Activated T-helper 1 cell treated with anti-CD3 and anti-CD28 coated beads, Interleukin-12 subunit alpha, Interleukin-12 subunit beta, Interleukin-2, Interleukin-4 antibody, amounts not matched to agents 30 ng/mL and 10 ng/mL and 1 ng/mL, durations not matched to agents 14 hours and 24 hours and 36 hours (primary cell): ENCODE measurements at regions of chr11 and their contacts with region 1.

Region 1: DNA sequence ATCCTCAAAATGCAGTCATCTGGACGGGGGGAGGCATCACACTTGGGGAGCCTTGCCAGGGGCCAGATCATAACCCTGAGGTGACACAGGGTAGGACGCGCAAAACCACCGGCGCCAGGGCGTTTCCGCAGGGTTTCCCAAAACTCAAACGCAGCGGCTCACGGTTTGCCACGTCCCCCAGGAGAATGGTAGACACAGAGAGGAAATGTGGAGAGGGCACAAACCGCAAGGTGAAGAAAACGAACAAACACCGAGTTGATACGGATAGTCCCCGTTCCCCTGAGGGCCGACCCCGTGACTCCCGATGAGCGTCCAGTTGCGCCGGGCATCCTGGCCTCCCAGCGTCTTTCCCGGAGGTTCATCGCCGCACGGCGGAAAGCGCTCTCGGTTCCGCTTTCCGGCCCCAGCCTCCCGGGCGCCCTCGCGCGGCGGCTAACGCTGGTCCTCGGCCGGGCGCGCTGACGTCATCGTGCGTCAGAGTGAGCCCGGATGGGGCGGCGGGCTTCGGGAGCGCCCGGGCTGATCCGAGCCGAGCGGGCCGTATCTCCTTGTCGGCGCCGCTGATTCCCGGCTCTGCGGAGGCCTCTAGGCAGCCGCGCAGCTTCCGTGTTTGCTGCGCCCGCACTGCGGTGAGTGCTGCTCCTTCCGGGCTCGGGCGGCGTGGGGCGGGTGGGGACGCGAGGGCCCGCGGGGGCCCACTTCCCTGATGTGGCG is at the start of gene BIRC2:
- DNase-seq: peak; percentile 94
- H3K4me3 Mint-ChIP-seq: peak within 1 kb of the TSS; percentile 98
- H3K27ac Mint-ChIP-seq: peak within 1 kb of the TSS; percentile 99
- H3K4me1 Mint-ChIP-seq: peaks cover 45% of the 10 kb centered on the region
- H3K27me3 Mint-ChIP-seq: no peaks in the 10 kb centered on the region
- total RNA-seq, gene BIRC2: 30.6 and 33.3 TPM in 2 replicates

Region 2: DNA sequence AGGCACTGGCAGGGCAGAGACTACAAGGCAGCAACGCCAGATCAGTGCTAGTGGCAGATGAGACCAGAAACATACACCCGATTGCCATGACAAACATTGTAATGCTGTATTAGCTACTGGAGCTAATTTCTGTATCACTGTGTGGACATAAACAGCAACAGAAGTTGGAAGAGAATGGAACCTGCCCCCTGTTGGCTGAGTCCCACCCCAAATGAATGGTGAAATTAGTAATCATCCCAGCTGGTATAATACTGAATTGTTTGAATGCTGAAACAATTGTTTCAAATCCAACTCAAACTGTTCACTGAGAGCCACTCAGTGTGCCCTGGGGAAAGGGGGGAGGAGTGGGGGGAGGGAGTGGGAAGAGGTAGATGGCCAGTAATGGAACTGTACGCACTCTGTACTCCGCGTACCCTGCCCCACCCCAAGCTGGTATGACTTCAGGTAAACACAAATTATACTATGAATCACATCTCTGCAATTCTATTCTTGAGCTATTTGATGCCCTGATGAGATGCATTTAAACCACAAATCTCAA is 40.8 kb before region 1 on chr11:
- intact Hi-C with region 1: no loop called
- DNase-seq: no peak
- H3K4me3 Mint-ChIP-seq: peak overlapping the region; percentile 72
- H3K27ac Mint-ChIP-seq: peak overlapping the region; percentile 59
- H3K4me1 Mint-ChIP-seq: peaks cover 57% of the 10 kb centered on the region
- H3K27me3 Mint-ChIP-seq: no peaks in the 10 kb centered on the region

Region 3: DNA sequence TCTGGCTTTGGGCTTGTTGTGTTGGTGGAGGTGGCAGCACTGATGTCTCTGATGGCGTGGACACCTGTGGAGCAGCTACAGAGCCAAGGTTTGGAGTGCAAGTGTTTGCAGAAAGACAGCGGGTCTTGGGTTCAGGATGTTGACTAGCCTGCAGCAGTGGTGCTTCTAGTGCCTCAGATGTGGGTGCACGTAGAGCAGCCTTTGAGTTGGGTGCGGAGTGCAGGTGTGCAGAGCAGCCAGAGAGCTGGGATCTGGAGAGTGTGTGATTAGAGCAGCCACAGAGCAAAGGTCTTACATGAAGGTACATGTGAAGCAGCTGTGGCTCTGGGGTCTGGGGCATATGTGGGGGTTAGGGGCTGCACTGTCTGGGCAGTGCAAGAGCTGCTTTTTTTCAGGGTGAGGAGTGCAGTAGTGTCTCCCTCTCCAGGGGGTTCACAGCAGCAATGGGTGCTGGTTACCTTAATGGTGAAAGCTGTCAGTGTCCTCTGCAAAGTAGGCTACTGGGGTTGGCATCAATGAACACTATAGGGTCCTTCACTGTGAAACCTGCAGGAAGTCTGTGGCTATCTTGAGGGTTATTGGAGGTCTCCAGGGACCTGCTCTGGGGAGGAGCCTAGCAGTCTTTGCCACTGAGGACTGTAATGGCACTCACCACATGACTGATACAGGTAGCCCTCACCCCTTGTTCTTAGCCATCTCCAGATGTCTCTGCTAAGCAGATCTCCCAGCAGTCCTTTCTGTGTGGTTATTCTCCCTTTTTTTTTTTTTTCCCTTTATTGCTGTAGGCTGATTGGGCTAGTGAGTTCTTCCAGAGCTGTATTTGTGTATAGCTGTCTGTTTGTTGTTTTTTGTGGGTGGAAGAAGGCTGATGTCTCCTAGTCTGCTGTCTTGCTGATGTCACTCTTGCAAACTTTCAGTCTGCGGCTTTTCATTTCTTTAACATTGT is 14.5 kb after region 1 on chr11:
- intact Hi-C with region 1: loop called (anchors 1 kb)
- DNase-seq: no peak
- H3K4me3 Mint-ChIP-seq: peak overlapping the region; percentile 48
- H3K27ac Mint-ChIP-seq: peak overlapping the region; percentile 10
- H3K4me1 Mint-ChIP-seq: peaks cover 36% of the 10 kb centered on the region
- H3K27me3 Mint-ChIP-seq: no peaks in the 10 kb centered on the region

Region 4: DNA sequence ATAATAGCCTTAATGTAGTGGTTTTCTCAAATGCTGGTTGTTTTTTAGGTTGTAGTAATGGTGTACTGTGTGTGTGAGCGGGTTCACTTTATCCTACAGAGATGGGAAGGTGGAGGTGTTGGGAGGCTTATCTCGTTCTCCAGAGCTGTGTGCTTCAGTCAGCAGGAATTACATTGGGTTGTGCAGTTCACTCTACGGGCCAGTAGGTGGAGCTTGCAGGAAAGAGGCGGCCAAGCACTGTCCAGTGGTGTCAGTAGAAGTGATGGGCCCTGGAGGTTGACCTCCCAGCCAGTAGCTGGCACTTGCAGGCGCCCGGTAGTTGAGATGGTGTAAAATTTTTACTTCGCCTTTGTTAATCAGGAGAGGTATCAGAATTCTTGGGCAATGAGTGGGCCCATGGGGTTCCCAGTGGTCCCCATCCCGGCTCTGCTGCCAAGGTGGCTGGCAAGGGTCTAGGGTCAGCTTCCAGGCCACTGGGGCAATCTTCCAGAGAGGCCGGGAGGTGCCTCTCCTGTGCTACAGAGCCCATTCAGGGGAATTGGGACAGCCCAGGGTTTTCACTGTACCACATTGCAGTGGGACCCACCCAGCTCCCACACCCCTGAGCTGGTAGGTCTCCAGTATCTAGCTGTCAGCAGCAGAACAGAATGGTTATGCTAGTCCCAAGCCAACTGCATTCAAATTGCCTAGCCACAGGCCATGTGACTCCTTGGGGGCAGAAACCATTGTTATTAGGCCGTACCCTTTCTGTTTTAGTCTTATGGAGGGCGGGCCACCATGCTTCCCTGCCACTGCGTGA is 44.0 kb after region 1 on chr11:
- intact Hi-C with region 1: loop called (anchors 2 kb)
- DNase-seq: peak; percentile 36
- H3K4me3 Mint-ChIP-seq: no peak overlapping the region
- H3K27ac Mint-ChIP-seq: no peak overlapping the region
- H3K4me1 Mint-ChIP-seq: peaks cover 52% of the 10 kb centered on the region
- H3K27me3 Mint-ChIP-seq: no peaks in the 10 kb centered on the region

Region 5: GRCh38 chr11:102485095-102485722 is 138.3 kb after region 1 on chr11:
- intact Hi-C with region 1: no loop called
- DNase-seq: no peak
- H3K4me3 Mint-ChIP-seq: no peak overlapping the region
- H3K27ac Mint-ChIP-seq: no peak overlapping the region
- H3K4me1 Mint-ChIP-seq: peaks cover 30% of the 10 kb centered on the region
- H3K27me3 Mint-ChIP-seq: peaks cover 2% of the 10 kb centered on the region

Region 6: DNA sequence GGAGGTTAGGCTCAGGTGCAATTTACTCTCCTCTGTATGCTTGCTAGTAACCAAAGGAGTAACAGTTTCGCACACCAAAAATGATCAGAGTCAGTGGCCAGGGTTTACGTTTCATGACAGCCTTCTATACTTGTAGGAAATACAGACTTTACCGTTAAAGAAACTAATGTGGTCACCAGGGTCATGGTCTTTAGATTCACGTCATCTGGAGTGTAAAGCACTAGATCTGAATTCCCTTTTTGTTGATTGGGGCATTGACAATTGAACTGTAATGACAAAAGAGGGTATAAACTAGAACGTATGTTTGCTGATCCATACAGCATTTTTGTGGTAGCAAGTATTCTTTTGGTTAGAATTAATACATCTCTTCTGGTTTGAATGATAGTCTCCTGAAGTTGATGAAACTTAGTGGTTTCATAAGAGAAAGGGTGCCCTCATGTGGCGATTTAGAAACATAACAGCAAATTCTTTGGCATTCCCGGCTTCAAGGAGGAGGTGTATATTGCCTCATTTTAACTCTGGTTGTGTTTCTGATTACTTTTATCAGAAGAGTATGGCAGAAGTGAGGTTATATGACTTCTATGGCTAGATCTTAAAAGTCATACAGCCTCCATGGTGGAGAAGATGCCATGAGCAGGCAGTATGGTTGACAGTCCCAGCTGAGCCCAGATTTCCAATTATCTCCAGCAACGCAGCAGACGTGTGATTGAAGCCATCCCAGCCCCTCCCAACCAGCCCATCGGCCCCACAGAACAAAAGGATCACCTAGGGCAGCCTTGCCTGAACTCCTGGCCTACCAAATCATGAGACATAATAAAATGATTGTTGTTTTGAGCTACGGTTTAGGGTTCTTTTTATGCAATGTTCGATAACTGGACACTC is 148.5 kb after region 1 on chr11:
- intact Hi-C with region 1: loop called (anchors 1 kb)
- DNase-seq: peak; percentile 18
- H3K4me3 Mint-ChIP-seq: no peak overlapping the region
- H3K27ac Mint-ChIP-seq: no peak overlapping the region
- H3K4me1 Mint-ChIP-seq: peaks cover 30% of the 10 kb centered on the region
- H3K27me3 Mint-ChIP-seq: peaks cover 2% of the 10 kb centered on the region

Region 7: DNA sequence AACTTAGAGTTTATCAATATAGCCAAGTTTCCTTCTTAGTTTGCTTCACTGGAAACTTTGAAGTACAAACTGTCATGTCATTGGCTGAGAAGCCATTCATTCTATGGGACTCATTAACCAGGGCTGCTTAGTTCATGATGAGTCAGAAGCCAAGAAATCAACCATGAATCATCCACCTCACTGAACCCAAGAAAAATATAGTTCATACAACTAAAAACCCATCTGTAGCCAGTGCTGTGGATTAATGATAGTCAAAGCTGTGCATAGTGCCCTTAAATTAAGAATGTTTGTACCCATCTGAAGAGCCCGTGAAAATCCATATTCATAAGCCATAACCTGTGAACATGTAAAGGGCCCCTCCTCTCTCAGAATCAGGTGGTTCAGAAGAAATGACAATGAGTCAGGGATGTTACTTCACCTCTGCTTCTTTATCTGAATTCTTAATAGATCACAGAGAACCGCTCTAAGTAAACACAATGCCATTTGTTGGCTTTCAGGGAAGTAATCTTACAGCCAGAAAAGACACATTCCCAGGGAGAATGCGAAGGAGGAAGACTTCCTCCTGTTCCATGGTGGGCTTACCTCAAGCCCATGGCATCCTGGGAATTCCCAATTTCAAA is 252.8 kb after region 1 on chr11:
- intact Hi-C with region 1: loop called (anchors 1 kb)
- DNase-seq: no peak
- H3K4me3 Mint-ChIP-seq: no peak overlapping the region
- H3K27ac Mint-ChIP-seq: peak overlapping the region; percentile 64
- H3K4me1 Mint-ChIP-seq: peaks cover 47% of the 10 kb centered on the region
- H3K27me3 Mint-ChIP-seq: no peaks in the 10 kb centered on the region

Region 8: DNA sequence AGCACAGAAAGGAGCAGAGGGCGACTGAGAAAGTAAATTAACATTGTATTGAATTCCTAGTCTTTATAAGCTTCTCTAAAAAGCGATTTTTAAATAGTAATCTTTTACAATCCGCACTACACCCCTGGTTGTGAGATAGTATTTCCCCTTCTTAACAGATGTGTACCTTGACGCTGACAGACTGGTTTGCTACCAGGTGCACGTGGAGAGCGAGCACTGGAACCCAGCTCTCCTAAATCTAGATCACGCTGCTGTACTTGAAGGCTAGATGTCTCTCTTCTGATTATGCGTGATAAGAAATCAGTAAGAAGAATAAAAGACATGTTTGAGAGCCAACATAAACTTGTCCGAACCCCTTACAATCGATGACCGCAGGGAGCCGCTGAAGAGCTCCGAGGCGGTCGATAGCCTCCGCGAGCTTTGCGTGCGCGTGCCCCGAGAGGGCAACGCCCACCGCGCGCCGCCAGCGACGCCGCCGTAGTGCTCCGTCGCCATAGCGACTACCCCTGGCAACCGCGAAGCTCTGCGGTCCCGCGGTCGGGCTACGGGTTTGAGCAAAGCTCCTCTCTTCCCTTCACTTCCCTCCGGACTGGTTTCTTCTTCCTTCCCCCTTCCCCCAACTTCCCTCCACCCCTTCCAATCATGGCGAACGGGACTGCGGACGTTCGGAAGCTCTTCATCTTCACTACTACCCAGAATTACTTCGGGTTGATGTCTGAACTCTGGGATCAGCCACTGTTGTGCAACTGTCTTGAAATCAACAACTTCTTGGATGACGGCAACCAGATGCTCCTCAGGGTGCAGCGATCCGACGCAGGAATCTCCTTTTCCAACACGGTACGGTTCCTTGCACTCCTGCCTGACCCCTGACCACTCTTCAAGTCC is 762.3 kb after region 1 on chr11 and contains the start of gene DYNC2H1:
- intact Hi-C with region 1: loop called (anchors 2 kb)
- DNase-seq: peak; percentile 87
- H3K4me3 Mint-ChIP-seq: peak within 1 kb of the TSS; percentile 92
- H3K27ac Mint-ChIP-seq: peak within 1 kb of the TSS; percentile 90
- H3K4me1 Mint-ChIP-seq: peaks cover 8% of the 10 kb centered on the region
- H3K27me3 Mint-ChIP-seq: peaks cover 35% of the 10 kb centered on the region
- total RNA-seq, gene DYNC2H1: 0.91 and 1.1 TPM in 2 replicates